ENCODE measurements at regions of chr17 and their contacts with region 1.

Region 1: DNA sequence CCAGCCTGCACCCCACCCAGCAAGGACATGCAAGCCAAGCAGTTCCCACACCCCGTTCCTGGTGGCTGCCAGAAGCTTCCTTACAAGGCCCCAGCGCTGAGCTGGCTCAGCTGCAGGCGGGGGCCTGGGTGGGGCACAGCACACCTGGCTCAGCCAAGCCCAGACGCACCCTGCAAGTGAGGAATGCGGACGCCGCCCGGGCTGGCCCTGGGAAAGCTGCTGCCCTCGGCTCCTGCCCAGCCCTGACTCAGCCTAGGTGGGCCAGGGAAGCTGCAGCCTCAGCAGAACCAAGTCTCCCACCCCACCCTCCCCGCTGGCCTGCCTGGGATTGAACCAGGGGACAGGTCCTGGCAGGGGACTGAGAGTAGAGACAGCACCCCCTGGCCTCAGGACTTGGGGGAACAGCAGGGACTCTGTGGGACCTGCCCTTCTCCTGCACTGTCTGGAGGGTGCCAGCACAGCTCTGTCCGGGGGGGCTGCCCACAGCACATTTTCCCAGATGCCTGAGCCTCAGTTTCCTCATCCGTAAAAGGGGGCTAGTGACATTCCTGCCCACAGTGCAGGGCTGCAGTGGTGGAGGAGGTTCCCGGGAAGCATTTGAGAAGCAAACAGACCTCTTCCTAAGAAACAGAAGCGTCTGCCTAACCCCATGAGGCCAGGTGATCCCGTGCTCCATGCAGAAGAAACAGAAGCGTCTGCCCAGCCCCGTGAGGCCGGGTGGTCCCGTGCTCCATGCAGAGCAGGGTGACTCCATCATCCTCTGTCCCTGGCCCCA is 29.9 kb upstream of the KRT17 start:
- DNase-seq: peak; percentile 38 to 79
- ATAC-seq: peak; percentile 7 to 44; a peak in 3 of 6 replicates
- H3K4me3 ChIP-seq: no peak overlapping the region
- H3K27ac ChIP-seq: peak overlapping the region; percentile 43 to 59; a peak in 4 of 6 replicates
- H3K4me1 ChIP-seq: peaks cover 38% of the 10 kb centered on the region
- CTCF ChIP-seq: no peak
- EP300 ChIP-seq: no peak
- POLR2A ChIP-seq: no peak
- RAD21 ChIP-seq: no peak

Region 2: GRCh38 chr17:40803617-40804082 is 850.7 kb before region 1 on chr17:
- CTCF ChIA-PET with region 1: interaction called, 282 read pairs
- POLR2A ChIA-PET with region 1: no interaction called
- DNase-seq: peak; percentile 88 to 96
- ATAC-seq: peak; percentile 99
- H3K4me3 ChIP-seq: no peak overlapping the region
- H3K27ac ChIP-seq: peak overlapping the region; percentile 27 to 56; a peak in 4 of 6 replicates
- H3K4me1 ChIP-seq: peaks cover 7% of the 10 kb centered on the region
- CTCF ChIP-seq: peak; percentile 98
- EP300 ChIP-seq: no peak
- POLR2A ChIP-seq: no peak
- RAD21 ChIP-seq: peak; percentile 100

Region 3: GRCh38 chr17:41811549-41812380 is 157.4 kb after region 1 on chr17 and contains the start of gene P3H4:
- CTCF ChIA-PET with region 1: no interaction called
- POLR2A ChIA-PET with region 1: no interaction called
- DNase-seq: peak; percentile 86 to 87
- ATAC-seq: peak; percentile 83 to 86
- H3K4me3 ChIP-seq: peak within 1 kb of the TSS; percentile 79
- H3K27ac ChIP-seq: peak within 1 kb of the TSS; percentile 96 to 97
- H3K4me1 ChIP-seq: peaks cover 30% of the 10 kb centered on the region
- CTCF ChIP-seq: peak; percentile 90
- EP300 ChIP-seq: no peak
- POLR2A ChIP-seq: peak; percentile 47; the same call in 1 of the 2 replicates
- RAD21 ChIP-seq: peak; percentile 51 to 80
- polyA plus RNA-seq, gene P3H4: 32.1 and 36.0 TPM in 2 replicates